KBM-7 (cell line): ENCODE measurements at regions of chr10 and their contacts with region 1.

Region 1: GRCh38 chr10:74255888-74256357 is 104.9 kb downstream of the ADK start:
- DNase-seq: peak; percentile 65

Region 2: GRCh38 chr10:75099952-75100763 is 844.2 kb after region 1 on chr10:
- in situ Hi-C with region 1: loop called (anchors 25 kb)
- DNase-seq: peak; percentile 77